Uterus (tissue), 4 donors: ENCODE measurements at regions of chr19 and their contacts with region 1.

Region 1: DNA sequence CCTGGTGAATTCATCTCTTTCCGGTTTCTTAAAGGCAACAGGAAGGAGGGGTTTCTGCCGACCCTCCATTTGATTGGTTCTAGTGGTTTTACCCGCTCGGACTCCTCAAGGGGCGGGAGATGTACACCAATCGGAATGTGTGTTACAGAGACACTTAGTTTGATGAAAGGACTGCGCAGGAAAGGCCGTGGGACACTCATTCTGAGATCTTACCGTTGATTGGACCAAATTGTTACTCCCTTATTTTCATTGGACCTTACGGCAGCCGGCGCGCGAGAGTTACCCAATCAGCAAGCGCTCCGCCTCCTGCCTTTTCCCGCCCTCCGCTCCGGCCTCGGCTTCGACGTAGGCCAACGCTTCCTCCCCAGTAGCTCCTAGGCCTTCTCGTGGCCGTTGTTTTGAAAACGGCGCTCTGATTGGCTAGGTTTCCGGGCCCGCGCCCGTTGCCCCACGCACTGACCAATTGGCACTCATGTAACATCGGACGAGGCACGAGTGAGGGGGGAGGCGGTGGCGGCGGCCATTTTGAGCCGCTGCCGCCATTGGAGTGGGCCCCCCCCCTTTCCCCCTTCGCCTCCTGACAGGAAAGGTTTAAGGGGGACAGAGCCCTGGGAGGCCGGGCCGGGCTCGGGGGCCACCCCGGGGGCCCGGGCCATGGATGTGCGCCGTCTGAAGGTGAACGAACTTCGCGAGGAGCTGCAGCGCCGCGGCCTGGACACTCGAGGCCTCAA is at the start of gene HNRNPUL1:
- DNase-seq: peak; percentile 99
- H3K4me3 ChIP-seq: peak within 1 kb of the TSS; percentile 80 to 90
- H3K27ac ChIP-seq: peak within 1 kb of the TSS; percentile 98 to 99
- H3K4me1 ChIP-seq: peaks cover 0 to 11% of the 10 kb centered on the region in 2 donors
- H3K27me3 ChIP-seq: no peaks in the 10 kb centered on the region
- CTCF ChIP-seq: peak in 2 of 4 experiments; percentile 35 to 50
- POLR2A ChIP-seq: peak; percentile 41 to 52
- total RNA-seq, gene HNRNPUL1: 49.7 to 219 (median 87.4) TPM

Region 2: GRCh38 chr19:41203371-41203770 is 60.6 kb before region 1 on chr19:
- intact Hi-C with region 1: loop called (anchors 5 kb)
- DNase-seq: no peak
- H3K4me3 ChIP-seq: no peak overlapping the region
- H3K27ac ChIP-seq: no peak overlapping the region
- H3K4me1 ChIP-seq: no peaks in the 10 kb centered on the region
- H3K27me3 ChIP-seq: no peaks in the 10 kb centered on the region
- CTCF ChIP-seq: no peak
- POLR2A ChIP-seq: no peak

Region 3: DNA sequence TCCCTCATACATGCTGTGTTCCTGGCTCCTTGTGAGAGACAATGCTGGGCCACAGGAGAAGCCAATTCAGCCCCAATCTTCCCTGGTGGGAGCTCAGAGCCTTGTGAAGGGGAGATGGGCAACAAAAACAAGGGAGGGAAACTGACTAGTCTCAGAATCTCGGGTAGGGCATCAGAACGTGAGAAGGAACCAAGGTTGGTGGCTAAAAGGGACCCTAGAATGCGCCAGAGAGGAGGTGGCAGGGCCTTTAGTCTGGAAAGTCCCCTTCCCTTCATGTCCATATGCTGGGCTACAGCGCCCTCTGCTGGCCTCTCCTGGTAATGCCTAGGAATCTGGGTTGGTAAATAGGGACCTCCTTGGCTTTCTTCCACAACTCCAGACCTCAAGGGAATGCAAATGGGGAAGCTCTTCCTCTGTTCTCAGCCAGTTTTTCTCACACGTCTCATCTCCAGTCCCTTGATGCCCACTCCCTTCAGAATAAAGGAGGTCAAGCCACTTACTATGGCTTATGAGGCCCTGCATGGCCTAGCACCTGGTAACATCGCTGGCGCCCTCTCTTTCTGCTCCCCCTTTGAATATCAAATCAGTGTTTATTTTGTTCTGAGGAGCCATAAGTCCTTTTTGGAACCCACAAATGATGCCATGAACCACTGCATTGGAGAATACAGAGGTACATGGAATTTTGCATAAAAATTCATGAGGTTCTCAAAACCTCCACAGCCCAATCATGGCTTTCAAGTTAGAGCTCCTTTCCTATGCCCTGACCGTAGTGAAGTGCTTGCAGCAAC is 44.6 kb after region 1 on chr19:
- intact Hi-C with region 1: loop called (anchors 5 kb)
- DNase-seq: peak; percentile 92 to 95
- H3K4me3 ChIP-seq: peak overlapping the region; percentile 63 to 78
- H3K27ac ChIP-seq: peak overlapping the region; percentile 90 to 96
- H3K4me1 ChIP-seq: peaks cover 3 to 10% of the 10 kb centered on the region in 2 donors
- H3K27me3 ChIP-seq: no peaks in the 10 kb centered on the region
- CTCF ChIP-seq: peak; percentile 95 to 97 (median 96)
- POLR2A ChIP-seq: no peak